Sciatic nerve (tissue), 2 donors: ENCODE measurements at regions of chr11 and their contacts with region 1.

Region 1: DNA sequence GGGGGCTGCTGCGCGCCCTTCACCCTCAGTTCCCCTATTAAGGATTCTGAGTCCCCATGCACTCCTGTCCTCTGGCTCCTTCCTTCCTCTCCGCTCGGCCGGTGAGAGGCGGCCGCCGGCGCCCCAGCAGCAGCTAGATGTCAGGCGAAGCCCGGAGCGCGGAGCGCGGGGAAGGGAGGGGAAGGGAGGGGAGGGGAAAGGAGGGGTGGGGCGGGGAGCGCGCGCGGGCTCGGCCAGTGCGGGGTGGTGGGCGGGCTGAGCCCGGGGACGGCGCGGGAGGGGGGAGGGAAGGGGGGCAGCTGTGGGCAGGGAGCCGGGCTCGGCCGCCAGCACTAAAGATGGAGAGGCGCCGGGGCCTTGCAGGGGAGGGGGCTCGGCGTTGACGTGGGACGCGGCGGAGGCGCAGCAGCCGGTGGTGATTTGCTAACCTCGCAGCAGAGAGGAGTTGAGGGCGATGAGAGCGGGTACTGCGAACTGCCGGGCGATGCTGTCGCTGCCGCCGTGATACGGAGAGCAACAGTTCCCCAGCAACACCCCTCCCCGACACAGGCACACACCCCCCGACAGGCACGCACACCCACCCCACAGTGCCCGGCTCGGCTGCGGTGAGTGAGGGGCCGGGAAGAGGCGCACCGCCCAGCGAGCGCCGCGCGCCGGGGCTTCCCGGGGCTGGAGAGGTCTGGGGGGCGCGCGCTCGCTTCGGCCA is at the start of gene ZBTB16:
- DNase-seq: peak; percentile 93
- ATAC-seq: peak; percentile 82
- total RNA-seq, gene ZBTB16: 22.7 TPM

Region 2: DNA sequence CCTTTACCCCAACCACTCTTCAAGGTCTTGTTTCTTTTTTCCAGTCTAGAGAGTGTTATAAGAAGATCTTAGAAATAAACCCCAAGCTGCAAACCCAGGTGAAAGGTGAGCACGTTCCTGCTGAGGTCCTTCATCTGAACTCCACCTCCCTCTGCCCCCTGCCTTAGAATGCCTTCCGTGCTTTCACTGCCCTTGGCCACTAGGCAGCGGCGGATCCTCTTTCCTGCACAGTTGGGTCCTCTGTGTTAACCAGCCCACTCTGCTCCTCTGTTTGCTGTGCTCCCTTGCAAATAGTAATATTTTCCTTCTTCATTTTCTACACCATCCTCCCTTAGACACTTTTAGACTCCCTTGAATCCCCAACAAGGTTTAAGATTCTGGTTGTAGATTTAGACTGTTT is 720.7 kb before region 1 on chr11:
- intact Hi-C with region 1: loop called (anchors 5 kb)
- DNase-seq: no peak
- ATAC-seq: no peak

Region 3: GRCh38 chr11:113613619-113614018 is 445.8 kb before region 1 on chr11:
- intact Hi-C with region 1: no loop called
- DNase-seq: no peak
- ATAC-seq: no peak

Region 4: GRCh38 chr11:114159802-114160632 is 100.6 kb after region 1 on chr11:
- intact Hi-C with region 1: no loop called
- DNase-seq: peak; percentile 100
- ATAC-seq: peak; percentile 83

Region 5: DNA sequence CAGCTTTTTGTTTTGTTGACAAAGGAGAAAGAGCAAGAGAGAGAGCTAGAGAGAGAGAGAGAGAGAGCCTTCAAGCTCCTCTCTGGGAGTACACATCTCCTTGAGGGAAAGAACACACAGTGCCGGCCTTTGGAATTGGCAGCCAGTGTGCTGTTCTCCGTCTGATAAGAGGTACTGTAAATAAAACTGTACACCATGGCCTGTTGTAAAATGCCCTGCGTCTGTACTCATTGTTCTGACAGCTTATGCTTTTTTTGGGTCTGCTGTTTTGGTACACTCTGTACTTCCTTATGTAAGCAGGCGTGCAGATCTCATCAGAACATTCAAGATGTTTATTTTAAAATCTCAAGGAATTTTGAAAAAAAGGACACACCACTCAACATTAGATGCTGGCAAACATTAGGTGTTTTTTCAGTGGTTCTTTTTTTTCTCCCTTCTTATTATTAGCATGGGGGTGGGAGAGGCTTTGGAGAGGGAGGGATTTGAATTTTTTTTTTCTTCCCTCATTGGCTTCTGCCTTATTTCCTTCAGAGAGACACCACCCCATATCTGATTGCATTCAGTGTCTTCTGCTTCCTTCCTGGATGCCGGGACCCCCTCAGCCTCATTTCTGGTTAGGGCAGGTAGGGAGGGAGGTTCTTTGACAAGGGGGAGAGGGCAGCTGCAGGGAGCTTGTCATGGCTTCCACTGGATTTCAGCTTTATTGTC is 120.0 kb after region 1 on chr11:
- intact Hi-C with region 1: loop called (anchors 5 kb)
- DNase-seq: no peak
- ATAC-seq: peak; percentile 94

Region 6: DNA sequence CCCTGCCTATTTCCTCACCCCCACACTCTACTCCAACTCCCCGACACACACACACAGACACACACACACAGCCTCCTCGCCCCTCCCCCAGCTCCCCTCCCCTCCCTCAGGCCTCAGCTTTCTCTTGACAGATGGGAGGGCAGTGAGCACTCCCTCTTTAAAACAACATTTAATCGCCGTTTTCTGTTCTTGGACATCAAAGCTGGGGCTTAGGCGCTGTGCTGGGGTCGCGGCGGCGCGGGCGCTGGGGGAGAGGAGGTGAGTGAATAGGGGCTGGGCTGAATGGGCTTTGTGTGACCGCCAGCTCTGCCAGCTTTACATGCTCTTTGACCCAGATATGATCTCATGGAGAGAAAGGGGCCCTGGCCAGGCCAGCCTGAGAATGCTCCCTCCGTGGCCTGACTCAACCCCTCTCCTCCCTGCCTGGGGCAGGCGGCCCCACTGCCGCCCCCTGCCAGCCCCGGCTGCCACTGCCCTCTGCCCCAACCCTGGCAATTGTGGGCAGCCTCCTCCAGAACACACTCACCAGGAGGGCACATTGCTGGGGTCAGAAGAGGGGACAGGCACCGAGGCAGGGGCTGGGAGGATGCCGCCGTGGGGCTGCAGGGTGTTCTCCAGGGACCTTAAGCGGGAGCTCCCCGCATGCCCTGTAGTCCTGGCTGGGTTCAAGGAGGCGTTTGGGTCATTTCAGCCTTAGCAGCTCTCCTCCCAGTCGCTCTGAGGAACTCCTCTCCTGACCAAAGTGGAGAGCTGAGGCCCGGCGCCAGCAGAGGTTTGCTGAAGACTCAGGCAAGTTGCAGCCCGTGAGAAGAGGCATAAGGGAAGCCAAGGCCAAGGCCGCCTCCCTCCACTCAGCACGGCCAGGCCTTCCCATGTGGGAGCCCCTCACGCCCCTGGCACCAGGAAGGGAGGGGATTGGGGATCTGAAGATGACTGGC is 198.5 kb after region 1 on chr11:
- intact Hi-C with region 1: loop called (anchors 5 kb)
- DNase-seq: peak; percentile 81
- ATAC-seq: peak; percentile 65